H1 (cell line): ENCODE measurements at regions of chr17 and their contacts with region 1.

Region 1: DNA sequence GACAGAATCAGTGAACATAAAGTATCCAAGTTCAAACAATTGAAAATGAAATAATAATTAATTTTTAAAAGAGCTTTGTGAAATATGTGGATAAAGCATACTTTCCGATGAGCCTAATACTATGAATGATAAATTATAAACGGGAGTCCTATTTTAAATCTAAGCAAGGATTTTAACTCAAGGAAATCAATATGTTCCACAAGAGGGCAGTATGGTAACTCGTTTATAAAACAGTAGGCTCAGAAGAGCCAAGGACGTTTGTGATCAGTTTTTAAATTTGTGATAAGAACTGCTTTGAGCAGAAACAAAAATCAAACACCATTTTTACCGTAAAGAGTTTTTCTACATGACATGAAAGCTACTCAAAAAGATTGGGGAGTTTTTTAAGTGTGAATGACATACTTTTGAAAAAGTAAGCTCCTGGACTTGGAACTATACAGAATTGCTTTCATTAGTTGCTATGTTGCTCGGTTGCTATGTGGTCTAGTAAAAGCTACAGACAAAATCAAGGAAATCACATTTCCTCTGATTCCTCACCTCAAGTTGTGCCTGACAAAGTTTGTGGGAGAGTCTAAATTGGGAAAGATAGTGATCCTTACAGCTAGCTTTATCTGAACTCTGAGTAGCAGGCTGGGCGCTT is 11.8 kb upstream of the TEKT1 start:
- DNase-seq: no peak
- H3K4me3 ChIP-seq: no peak overlapping the region
- H3K27ac ChIP-seq: no peak overlapping the region
- H3K4me1 ChIP-seq: no peaks in the 10 kb centered on the region
- H3K27me3 ChIP-seq: no peaks in the 10 kb centered on the region
- CTCF ChIP-seq: peak in 2 of 3 experiments; percentile 32 to 33; a peak in 2 of 4 replicates
- EP300 ChIP-seq: no peak
- POLR2A ChIP-seq: no peak
- RAD21 ChIP-seq: peak; percentile 46 to 52; a peak in 3 of 4 replicates

Region 2: GRCh38 chr17:6701719-6702118 is 141.6 kb before region 1 on chr17:
- CTCF ChIA-PET with region 1: interaction called, 20 read pairs
- POLR2A ChIA-PET with region 1: no interaction called
- DNase-seq: peak; percentile 21 to 92
- H3K4me3 ChIP-seq: no peak overlapping the region
- H3K27ac ChIP-seq: no peak overlapping the region
- H3K4me1 ChIP-seq: no peaks in the 10 kb centered on the region; a peak in 1 of 7 replicates
- H3K27me3 ChIP-seq: no peaks in the 10 kb centered on the region; a peak in 2 of 7 replicates
- CTCF ChIP-seq: peak; percentile 70 to 72 (median 70)
- EP300 ChIP-seq: no peak
- POLR2A ChIP-seq: no peak
- RAD21 ChIP-seq: peak; percentile 42 to 60

Region 3: DNA sequence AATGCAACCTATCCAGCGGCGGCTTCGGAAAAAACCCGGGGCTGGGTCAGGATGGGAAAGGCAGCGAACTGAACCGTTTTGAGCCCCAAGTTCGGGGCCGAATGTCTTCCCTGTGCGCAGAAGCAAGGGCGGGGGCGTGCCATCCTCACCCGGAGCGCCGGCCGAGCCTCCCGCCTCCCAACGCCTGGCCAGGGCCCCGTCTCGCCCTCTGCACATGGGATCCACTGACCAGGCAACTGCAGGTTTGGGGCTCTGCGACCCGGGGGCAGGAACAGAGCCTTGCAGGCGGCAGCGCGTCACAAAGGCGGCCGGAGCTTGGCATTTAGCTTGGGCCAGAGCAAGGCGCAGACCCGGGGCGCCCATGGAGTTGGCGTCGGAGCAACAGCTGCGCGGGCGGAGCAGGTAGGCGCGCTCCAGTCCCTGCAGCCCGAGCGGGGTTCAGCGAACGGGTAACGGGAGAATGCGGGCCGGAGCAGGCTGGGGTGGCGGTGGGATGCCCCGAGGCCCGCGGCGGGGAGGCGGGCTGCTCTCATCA is 67.4 kb before region 1 on chr17 and contains the start of gene FBXO39:
- CTCF ChIA-PET with region 1: interaction called, 11 read pairs
- POLR2A ChIA-PET with region 1: no interaction called
- DNase-seq: peak in 1 of 2 experiments; percentile 80
- H3K4me3 ChIP-seq: peak within 1 kb of the TSS; percentile 29 to 66 (median 59)
- H3K27ac ChIP-seq: no peak within 1 kb of the TSS
- H3K4me1 ChIP-seq: peaks cover 0 to 5% (median 0%) of the 10 kb centered on the region in 4 experiments; a peak in 2 of 7 replicates
- H3K27me3 ChIP-seq: peaks cover 2 to 17% (median 13%) of the 10 kb centered on the region in 4 experiments
- CTCF ChIP-seq: no peak
- EP300 ChIP-seq: no peak
- POLR2A ChIP-seq: no peak
- RAD21 ChIP-seq: no peak
- total RNA-seq, gene FBXO39: 0.22 TPM in 1 of 2 replicates, not detected in the other

Region 4: GRCh38 chr17:6823011-6823442 is 20.3 kb before region 1 on chr17:
- CTCF ChIA-PET with region 1: interaction called, 16 read pairs
- POLR2A ChIA-PET with region 1: no interaction called
- DNase-seq: no peak
- H3K4me3 ChIP-seq: no peak overlapping the region
- H3K27ac ChIP-seq: no peak overlapping the region
- H3K4me1 ChIP-seq: no peaks in the 10 kb centered on the region
- H3K27me3 ChIP-seq: no peaks in the 10 kb centered on the region; a peak in 2 of 7 replicates
- CTCF ChIP-seq: no peak
- EP300 ChIP-seq: no peak
- POLR2A ChIP-seq: no peak
- RAD21 ChIP-seq: no peak

Region 5: GRCh38 chr17:6853764-6854442 is 10.5 kb after region 1 on chr17:
- CTCF ChIA-PET with region 1: interaction called, 49 read pairs
- POLR2A ChIA-PET with region 1: no interaction called
- DNase-seq: peak; percentile 34 to 65
- H3K4me3 ChIP-seq: peak overlapping the region; percentile 50 to 69 (median 54)
- H3K27ac ChIP-seq: peak overlapping the region; percentile 59; the same call in 1 of the 2 replicates
- H3K4me1 ChIP-seq: no peaks in the 10 kb centered on the region
- H3K27me3 ChIP-seq: peaks cover 0 to 1% (median 0%) of the 10 kb centered on the region in 4 experiments; a peak in 1 of 7 replicates
- CTCF ChIP-seq: peak; percentile 56 to 74 (median 63)
- EP300 ChIP-seq: no peak
- POLR2A ChIP-seq: peak in 1 of 2 experiments; percentile 42; a peak in 2 of 3 replicates
- RAD21 ChIP-seq: peak in 1 of 2 experiments; percentile 43; a peak in 2 of 4 replicates

Region 6: DNA sequence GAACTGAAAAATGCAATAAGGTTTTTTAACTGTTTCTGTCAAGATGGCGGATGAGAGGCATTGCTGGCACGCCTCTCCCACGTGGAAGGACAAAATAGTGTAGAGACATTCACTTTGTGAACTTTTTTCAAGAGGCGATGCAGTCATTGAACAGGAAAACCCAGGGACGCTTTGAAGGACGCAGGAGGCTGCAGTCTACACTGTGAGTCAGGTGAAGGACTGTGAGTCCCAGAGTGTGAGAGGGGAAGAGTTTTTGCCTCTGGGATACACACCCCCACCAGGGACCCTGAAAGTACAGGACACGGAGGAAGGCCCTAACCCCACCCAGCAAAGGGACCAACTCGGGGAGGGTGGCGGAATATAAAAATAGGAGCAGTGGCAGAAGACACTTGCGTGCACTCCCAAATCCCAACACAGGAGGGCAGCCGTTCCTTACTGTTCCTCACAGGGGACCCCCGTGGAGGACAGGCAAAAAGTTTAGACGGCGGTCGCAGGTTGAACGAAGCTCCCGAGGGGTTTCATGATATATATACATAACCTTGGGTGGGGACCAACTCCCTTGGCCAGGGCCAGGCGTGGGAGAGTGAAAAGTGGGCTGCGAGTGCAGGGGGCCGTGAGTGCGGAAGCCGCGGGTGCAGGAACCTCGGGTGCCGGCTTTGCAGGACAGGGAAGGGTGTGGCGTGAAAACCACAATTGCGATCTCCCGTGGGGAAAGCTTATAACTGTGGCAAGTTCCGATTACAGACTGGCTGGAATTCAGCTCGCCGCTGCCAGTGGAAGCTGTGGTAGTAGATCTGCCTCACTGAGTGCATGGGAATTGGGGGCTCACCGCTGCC is 70.5 kb after region 1 on chr17:
- CTCF ChIA-PET with region 1: interaction called, 15 read pairs
- POLR2A ChIA-PET with region 1: no interaction called
- DNase-seq: peak; percentile 34 to 88
- H3K4me3 ChIP-seq: no peak overlapping the region
- H3K27ac ChIP-seq: no peak overlapping the region
- H3K4me1 ChIP-seq: no peaks in the 10 kb centered on the region
- H3K27me3 ChIP-seq: no peaks in the 10 kb centered on the region; a peak in 2 of 7 replicates
- CTCF ChIP-seq: peak; percentile 68 to 81 (median 77)
- EP300 ChIP-seq: no peak
- POLR2A ChIP-seq: no peak
- RAD21 ChIP-seq: peak; percentile 90

Region 7: DNA sequence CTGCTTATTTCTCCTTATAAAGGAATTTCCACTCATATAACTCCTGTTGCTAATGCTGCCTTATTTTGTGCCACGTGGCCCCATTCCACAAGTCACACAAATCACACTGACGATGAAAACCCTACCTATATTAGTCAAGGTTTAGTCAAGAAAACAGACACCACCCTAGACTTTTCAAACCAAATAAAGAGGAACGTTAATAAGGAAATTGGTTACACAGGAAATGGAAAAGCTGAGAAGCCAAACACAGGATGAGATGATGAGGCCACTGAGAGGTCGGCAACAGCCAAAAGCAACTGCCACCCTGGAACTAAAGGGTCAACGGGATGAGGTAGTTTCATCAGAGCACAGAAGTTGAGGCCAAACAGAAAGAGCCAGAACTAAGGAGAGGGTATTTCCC is 105.2 kb after region 1 on chr17:
- CTCF ChIA-PET with region 1: no interaction called
- POLR2A ChIA-PET with region 1: no interaction called
- DNase-seq: no peak
- H3K4me3 ChIP-seq: no peak overlapping the region
- H3K27ac ChIP-seq: no peak overlapping the region
- H3K4me1 ChIP-seq: no peaks in the 10 kb centered on the region
- H3K27me3 ChIP-seq: no peaks in the 10 kb centered on the region
- CTCF ChIP-seq: no peak
- EP300 ChIP-seq: no peak
- POLR2A ChIP-seq: no peak
- RAD21 ChIP-seq: no peak

Region 8: GRCh38 chr17:7004398-7005253 is 161.3 kb after region 1 on chr17:
- CTCF ChIA-PET with region 1: interaction called, 11 read pairs
- POLR2A ChIA-PET with region 1: interaction called, 3 read pairs
- DNase-seq: peak in 1 of 2 experiments; percentile 53
- H3K4me3 ChIP-seq: no peak overlapping the region
- H3K27ac ChIP-seq: no peak overlapping the region
- H3K4me1 ChIP-seq: no peaks in the 10 kb centered on the region
- H3K27me3 ChIP-seq: no peaks in the 10 kb centered on the region
- CTCF ChIP-seq: peak in 2 of 3 experiments; percentile 70; a peak in 3 of 4 replicates
- EP300 ChIP-seq: no peak
- POLR2A ChIP-seq: no peak
- RAD21 ChIP-seq: peak; percentile 82 to 88

Region 9: GRCh38 chr17:7095625-7096024 is 252.3 kb after region 1 on chr17:
- CTCF ChIA-PET with region 1: no interaction called
- POLR2A ChIA-PET with region 1: no interaction called
- DNase-seq: no peak
- H3K4me3 ChIP-seq: no peak overlapping the region
- H3K27ac ChIP-seq: no peak overlapping the region
- H3K4me1 ChIP-seq: no peaks in the 10 kb centered on the region
- H3K27me3 ChIP-seq: no peaks in the 10 kb centered on the region
- CTCF ChIP-seq: no peak
- EP300 ChIP-seq: no peak
- POLR2A ChIP-seq: no peak
- RAD21 ChIP-seq: no peak